A673 (cell line): ENCODE measurements at regions of chr17 and their contacts with region 1.

Region 1: DNA sequence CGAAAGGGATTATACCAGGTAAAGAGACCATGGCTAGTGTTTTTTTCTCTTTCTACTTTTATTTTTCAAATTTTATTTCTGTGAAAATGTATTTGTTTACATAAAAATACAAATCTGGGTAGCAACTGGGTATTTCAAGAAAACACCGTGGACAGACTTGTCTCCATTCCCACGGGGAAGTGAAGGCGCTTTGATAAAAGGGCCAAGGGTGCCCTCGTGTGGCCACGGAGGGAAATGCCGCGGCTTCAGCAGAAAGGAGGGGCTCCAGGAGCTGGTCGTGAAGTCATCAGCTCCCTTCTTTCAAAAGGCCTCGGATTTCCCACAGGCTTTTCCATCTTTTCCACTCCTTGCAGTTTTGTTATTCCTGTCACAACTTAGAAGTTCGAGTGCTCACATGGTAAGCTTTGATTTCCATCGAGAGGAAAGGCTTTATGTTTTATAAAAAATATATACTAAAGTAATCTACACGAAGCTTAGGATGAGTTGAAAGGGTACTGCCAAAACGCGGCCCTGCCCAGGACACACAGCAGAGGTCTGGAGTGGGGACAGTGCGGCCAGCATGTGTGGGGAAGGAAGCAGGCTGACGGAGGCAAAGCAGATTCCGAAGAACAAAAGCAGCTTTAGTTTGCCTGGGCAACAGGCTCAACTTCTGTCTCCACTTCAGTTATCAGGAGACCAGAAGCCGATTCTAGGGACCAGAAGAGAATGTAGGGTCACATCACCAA is 15.3 kb upstream of the MNT start:
- DNase-seq: peak; percentile 90
- H3K4me3 ChIP-seq: no peak overlapping the region
- H3K27ac ChIP-seq: peak overlapping the region; percentile 24
- H3K4me1 ChIP-seq: peaks cover 9% of the 10 kb centered on the region
- H3K27me3 ChIP-seq: no peaks in the 10 kb centered on the region
- CTCF ChIP-seq: peak; percentile 98

Region 2: GRCh38 chr17:2380226-2380922 is 35.8 kb before region 1 on chr17:
- CTCF ChIA-PET with region 1: interaction called, 79 read pairs
- POLR2A ChIA-PET with region 1: no interaction called
- intact Hi-C with region 1: loop called (anchors 1 kb)
- DNase-seq: no peak
- H3K4me3 ChIP-seq: no peak overlapping the region
- H3K27ac ChIP-seq: no peak overlapping the region
- H3K4me1 ChIP-seq: no peaks in the 10 kb centered on the region
- H3K27me3 ChIP-seq: no peaks in the 10 kb centered on the region
- CTCF ChIP-seq: no peak

Region 3: DNA sequence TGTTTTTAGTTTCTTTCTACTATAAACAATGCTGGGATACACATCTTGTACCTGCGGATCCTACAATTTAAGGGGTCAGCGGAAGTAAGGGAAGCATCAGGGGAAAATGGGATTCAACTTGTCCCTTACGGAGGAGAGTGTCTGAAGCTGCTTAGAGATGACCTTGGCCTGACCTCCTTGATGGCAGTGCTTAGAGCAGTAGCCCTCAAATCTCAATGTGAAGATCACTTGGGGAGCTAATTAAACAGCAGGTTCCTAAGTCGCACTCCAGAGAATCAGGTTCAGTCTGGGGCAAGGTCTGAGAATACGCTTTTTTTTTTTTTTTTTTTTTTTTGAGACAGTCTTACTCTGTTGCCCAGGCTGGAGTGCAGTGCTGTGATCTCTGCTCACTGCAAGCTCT is 105.1 kb after region 1 on chr17:
- CTCF ChIA-PET with region 1: no interaction called
- POLR2A ChIA-PET with region 1: no interaction called
- intact Hi-C with region 1: no loop called
- DNase-seq: no peak
- H3K4me3 ChIP-seq: no peak overlapping the region
- H3K27ac ChIP-seq: no peak overlapping the region
- H3K4me1 ChIP-seq: no peaks in the 10 kb centered on the region
- H3K27me3 ChIP-seq: no peaks in the 10 kb centered on the region
- CTCF ChIP-seq: no peak